CD4-positive, alpha-beta T cell (primary cell): ENCODE measurements at regions of chr14 and their contacts with region 1.

Region 1: DNA sequence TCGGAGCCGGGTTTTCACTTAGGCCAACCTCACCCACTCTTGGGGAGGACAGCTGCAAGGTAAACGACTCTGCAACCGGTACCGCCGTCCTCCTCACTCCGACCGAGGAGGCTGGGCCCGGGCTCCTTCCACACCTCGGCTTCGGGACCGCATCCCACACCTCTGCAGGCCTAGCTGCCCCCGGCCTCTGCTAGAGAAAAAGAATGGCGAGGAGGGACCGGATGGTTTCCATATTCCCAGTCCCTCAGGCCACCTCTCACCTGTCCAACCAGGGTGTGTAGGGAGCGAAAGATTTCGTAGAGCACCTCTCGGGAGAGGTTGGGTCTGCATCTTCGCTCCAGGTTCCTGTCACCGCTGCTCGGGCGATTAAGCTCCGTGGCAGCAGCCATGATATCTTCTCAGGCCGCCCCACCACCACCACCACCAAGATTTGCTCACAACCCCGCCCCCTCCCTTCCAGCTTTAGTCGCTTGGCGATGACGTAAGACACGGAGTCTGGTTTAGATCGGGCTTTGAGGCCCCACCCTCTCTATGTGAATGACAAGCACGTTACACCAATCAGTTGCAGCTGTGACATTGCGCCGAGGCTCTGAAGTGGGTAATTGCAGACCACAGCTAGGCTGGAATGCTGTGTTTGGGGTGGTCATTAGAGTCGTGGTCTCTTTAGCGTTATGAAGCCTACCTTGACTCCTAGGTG is at the start of gene MBIP:
- DNase-seq: peak; percentile 82 to 97 (median 87)
- ATAC-seq: peak; percentile 96
- H3K4me3 ChIP-seq: peak within 1 kb of the TSS; percentile 92
- H3K4me3 Mint-ChIP-seq: peak within 1 kb of the TSS; percentile 96
- H3K27ac ChIP-seq: peak within 1 kb of the TSS; percentile 21 to 55
- H3K27ac Mint-ChIP-seq: peak within 1 kb of the TSS; percentile 85
- H3K4me1 ChIP-seq: peaks cover 6% of the 10 kb centered on the region
- H3K4me1 Mint-ChIP-seq: peaks cover 48% of the 10 kb centered on the region
- H3K27me3 ChIP-seq: peaks cover 0 to 19% of the 10 kb centered on the region in 2 experiments
- H3K27me3 Mint-ChIP-seq: peaks cover 12% of the 10 kb centered on the region
- CTCF ChIP-seq: no peak
- total RNA-seq, gene MBIP: 77.9 to 78.9 TPM

Region 2: GRCh38 chr14:36373982-36374673 is 53.8 kb after region 1 on chr14:
- CTCF ChIA-PET with region 1: interaction called, 4 read pairs
- POLR2A ChIA-PET with region 1: no interaction called
- intact Hi-C with region 1: loop called in 1 of 2 experiments (anchors 1 kb)
- DNase-seq: peak; percentile 45 to 80 (median 60)
- ATAC-seq: peak; percentile 89
- H3K4me3 ChIP-seq: no peak overlapping the region
- H3K4me3 Mint-ChIP-seq: no peak overlapping the region
- H3K27ac ChIP-seq: no peak overlapping the region
- H3K27ac Mint-ChIP-seq: no peak overlapping the region
- H3K4me1 ChIP-seq: peaks cover 4% of the 10 kb centered on the region
- H3K4me1 Mint-ChIP-seq: no peaks in the 10 kb centered on the region
- H3K27me3 ChIP-seq: peaks cover 0 to 5% of the 10 kb centered on the region in 2 experiments
- H3K27me3 Mint-ChIP-seq: peaks cover 4% of the 10 kb centered on the region
- CTCF ChIP-seq: peak; percentile 85

Region 3: GRCh38 chr14:36394593-36394992 is 74.2 kb after region 1 on chr14:
- CTCF ChIA-PET with region 1: no interaction called
- POLR2A ChIA-PET with region 1: no interaction called
- intact Hi-C with region 1: no loop called
- DNase-seq: no peak
- ATAC-seq: no peak
- H3K4me3 ChIP-seq: no peak overlapping the region
- H3K4me3 Mint-ChIP-seq: no peak overlapping the region
- H3K27ac ChIP-seq: no peak overlapping the region
- H3K27ac Mint-ChIP-seq: no peak overlapping the region
- H3K4me1 ChIP-seq: no peaks in the 10 kb centered on the region
- H3K4me1 Mint-ChIP-seq: no peaks in the 10 kb centered on the region
- H3K27me3 ChIP-seq: peaks cover 0 to 5% of the 10 kb centered on the region in 2 experiments
- H3K27me3 Mint-ChIP-seq: peaks cover 35% of the 10 kb centered on the region
- CTCF ChIP-seq: no peak